ENCODE measurements at regions of chr1 and their contacts with region 1.

Region 1: DNA sequence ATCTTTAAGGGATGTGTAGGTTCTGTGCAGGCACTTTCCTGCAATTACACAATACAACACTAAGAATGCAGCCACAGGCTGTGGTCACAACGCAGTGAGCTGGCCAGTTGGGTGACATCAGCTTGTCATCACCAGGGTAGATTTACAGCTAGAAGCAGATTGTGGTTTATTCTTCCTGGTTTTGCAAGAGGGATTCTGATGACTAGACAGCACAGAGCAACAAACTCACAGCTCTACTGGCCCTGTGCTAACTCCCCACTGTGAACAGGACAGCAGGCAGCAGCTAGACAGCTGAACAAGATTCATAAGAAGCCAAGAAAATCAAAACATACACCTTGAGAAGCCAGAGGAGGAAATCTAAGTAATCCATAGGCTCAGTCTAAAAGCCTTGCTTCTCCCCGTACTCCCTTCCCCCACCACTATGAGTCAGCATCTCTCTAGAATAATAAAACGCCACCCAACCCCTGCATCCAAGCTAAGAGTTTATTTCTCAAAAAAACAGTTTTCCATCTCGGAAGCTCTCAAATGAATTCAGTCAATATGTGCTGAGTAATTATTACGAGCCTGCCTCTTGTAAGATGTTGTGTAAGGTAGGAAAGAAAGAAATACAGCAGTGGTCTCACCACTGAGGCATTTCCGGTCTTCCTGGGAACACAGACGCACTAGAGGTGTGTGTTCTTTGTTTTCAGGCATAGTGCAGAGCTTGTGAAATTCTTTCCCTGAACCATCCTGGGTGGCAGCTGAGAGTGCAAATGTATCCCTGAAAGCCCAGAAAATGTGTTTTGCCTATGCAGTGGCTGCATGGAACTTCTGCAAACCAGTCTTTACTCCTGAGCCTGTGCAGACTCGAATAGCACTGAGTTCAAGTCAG is 162.8 kb downstream of the NTPCR start:
- DNase-seq: peak; percentile 100
- ATAC-seq: peak; percentile 94
- H3K4me3 ChIP-seq: peak overlapping the region; percentile 0; the same call in 1 of the 2 replicates
- H3K27ac ChIP-seq: peak overlapping the region; percentile 81
- H3K4me1 ChIP-seq: peaks cover 16% of the 10 kb centered on the region
- H3K27me3 ChIP-seq: no peaks in the 10 kb centered on the region
- CTCF ChIP-seq: no peak
- POLR2A ChIP-seq: peak; percentile 66; the same call in 1 of the 2 replicates
- RAD21 ChIP-seq: no peak; the same call in 1 of the 2 replicates

Region 2: GRCh38 chr1:232620356-232620969 is 492.8 kb before region 1 on chr1:
- CTCF ChIA-PET with region 1: no interaction called
- POLR2A ChIA-PET with region 1: no interaction called
- dilution Hi-C with region 1: no loop called
- in situ Hi-C with region 1: no loop called
- intact Hi-C with region 1: no loop called
- DNase-seq: peak; percentile 71
- ATAC-seq: peak; percentile 56
- H3K4me3 ChIP-seq: no peak overlapping the region
- H3K27ac ChIP-seq: no peak overlapping the region
- H3K4me1 ChIP-seq: peaks cover 5% of the 10 kb centered on the region
- H3K27me3 ChIP-seq: no peaks in the 10 kb centered on the region
- CTCF ChIP-seq: no peak
- POLR2A ChIP-seq: no peak
- RAD21 ChIP-seq: no peak

Region 3: DNA sequence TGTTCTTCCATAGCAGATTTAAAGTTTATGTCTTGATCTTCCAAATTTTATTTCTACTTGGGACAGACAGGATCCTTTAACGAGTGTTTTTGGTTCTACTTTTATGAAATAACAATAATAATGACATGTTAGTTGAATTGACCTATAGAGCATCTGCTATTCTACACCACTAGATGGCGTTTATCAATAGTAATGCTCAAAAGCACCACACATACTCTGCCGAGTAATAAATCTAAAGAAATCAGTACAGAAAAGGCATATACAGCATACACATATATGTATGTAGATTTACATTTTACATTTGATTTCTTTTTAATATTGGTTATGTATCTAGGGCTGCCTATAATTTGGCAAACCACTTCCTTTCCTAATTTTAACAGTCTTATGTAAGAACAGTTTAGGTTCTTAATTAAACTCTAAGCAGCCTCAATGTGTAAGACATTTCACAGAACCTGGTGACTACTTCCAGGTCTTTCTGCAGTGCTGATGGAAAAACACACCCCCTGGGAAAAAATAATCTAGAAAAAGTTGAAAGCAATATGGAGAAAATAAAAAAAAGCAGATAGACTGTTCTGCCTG is 477.4 kb before region 1 on chr1:
- CTCF ChIA-PET with region 1: no interaction called
- POLR2A ChIA-PET with region 1: no interaction called
- dilution Hi-C with region 1: no loop called
- in situ Hi-C with region 1: no loop called
- intact Hi-C with region 1: loop called (anchors 5 kb)
- DNase-seq: peak; percentile 70
- ATAC-seq: peak; percentile 89
- H3K4me3 ChIP-seq: no peak overlapping the region
- H3K27ac ChIP-seq: no peak overlapping the region
- H3K4me1 ChIP-seq: no peaks in the 10 kb centered on the region
- H3K27me3 ChIP-seq: peaks cover 12% of the 10 kb centered on the region
- CTCF ChIP-seq: peak; percentile 83
- POLR2A ChIP-seq: no peak
- RAD21 ChIP-seq: peak; percentile 76

Region 4: DNA sequence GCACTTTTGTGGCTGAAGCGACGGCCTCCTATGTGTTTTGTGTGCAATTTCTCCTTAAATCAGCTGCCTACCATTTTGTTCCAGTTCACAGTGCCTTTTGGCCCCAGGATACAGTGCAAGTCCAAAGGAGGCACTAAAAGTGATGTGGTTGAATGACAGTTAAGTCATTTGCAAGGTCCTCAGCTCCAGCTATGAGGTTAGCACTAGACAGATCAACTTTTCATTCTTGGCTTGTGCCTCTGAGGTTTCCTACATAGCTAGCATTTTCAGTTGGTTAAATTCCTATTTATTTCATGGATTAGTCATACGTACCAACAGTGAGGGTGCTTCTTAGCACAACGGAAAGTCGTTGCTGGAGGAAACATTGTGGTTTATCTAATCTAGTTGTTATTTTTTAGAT is 222.2 kb before region 1 on chr1:
- CTCF ChIA-PET with region 1: no interaction called
- POLR2A ChIA-PET with region 1: no interaction called
- dilution Hi-C with region 1: no loop called
- in situ Hi-C with region 1: no loop called
- intact Hi-C with region 1: loop called (anchors 5 kb)
- DNase-seq: peak; percentile 81
- ATAC-seq: peak; percentile 99
- H3K4me3 ChIP-seq: no peak overlapping the region
- H3K27ac ChIP-seq: no peak overlapping the region; the same call in 1 of the 2 replicates
- H3K4me1 ChIP-seq: peaks cover 7% of the 10 kb centered on the region
- H3K27me3 ChIP-seq: peaks cover 5% of the 10 kb centered on the region; the same call in 1 of the 2 replicates
- CTCF ChIP-seq: no peak
- POLR2A ChIP-seq: no peak
- RAD21 ChIP-seq: no peak

Region 5: GRCh38 chr1:232950197-232951176 is 162.8 kb before region 1 on chr1 and contains the start of gene NTPCR:
- CTCF ChIA-PET with region 1: no interaction called
- POLR2A ChIA-PET with region 1: interaction called, 7 read pairs
- dilution Hi-C with region 1: no loop called
- in situ Hi-C with region 1: no loop called
- intact Hi-C with region 1: loop called (anchors 2 kb)
- DNase-seq: peak; percentile 90
- ATAC-seq: peak; percentile 94
- H3K4me3 ChIP-seq: peak within 1 kb of the TSS; percentile 76
- H3K27ac ChIP-seq: peak within 1 kb of the TSS; percentile 98
- H3K4me1 ChIP-seq: peaks cover 10% of the 10 kb centered on the region
- H3K27me3 ChIP-seq: no peaks in the 10 kb centered on the region
- CTCF ChIP-seq: no peak
- POLR2A ChIP-seq: peak; percentile 28; the same call in 1 of the 2 replicates
- RAD21 ChIP-seq: no peak
- total RNA-seq, gene NTPCR: 13.3 and 16.4 TPM in 2 replicates

Region 6: DNA sequence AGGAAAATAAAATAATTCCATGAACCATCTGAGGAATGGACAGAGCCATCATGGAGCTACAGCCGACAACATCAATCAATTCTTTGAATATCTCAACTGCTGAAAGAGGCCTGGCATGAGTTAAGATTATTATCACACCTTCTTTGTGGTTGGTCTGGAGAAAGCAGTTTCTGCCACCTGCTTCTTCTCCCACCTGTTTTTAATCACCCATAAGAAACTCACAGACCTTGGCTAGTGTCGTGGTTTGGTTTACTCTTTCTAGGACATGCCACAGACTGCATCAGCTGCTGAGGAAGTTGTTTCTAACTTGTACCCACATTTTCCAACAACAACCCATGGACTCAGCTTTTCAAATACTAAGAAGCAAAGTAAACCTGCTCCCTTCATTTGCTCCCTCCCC is 97.3 kb before region 1 on chr1:
- CTCF ChIA-PET with region 1: no interaction called
- POLR2A ChIA-PET with region 1: no interaction called
- dilution Hi-C with region 1: no loop called
- in situ Hi-C with region 1: no loop called
- intact Hi-C with region 1: loop called (anchors 5 kb)
- DNase-seq: no peak
- ATAC-seq: no peak
- H3K4me3 ChIP-seq: no peak overlapping the region
- H3K27ac ChIP-seq: peak overlapping the region; percentile 25; the same call in 1 of the 2 replicates
- H3K4me1 ChIP-seq: peaks cover 14% of the 10 kb centered on the region
- H3K27me3 ChIP-seq: no peaks in the 10 kb centered on the region
- CTCF ChIP-seq: no peak
- POLR2A ChIP-seq: no peak
- RAD21 ChIP-seq: no peak

Region 7: DNA sequence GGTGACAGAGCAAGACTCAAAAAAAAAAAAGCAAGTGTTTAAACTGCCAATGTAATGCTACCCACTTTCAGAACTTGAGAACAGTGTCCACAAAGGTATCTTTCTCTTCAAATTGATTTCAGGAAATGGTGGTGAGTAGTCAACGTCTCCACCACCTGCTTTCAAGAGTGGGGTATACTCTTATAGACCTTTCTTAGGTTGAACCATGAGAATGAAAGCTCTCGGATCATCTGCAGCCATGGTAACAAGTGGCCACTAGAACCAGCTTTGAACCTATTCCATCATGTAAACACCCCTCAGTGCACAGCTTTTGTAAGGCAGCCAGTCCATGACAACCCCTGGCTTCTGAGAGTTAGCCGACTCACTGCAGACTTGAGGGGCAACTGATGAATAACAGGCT is 55.4 kb before region 1 on chr1:
- CTCF ChIA-PET with region 1: no interaction called
- POLR2A ChIA-PET with region 1: no interaction called
- dilution Hi-C with region 1: no loop called
- in situ Hi-C with region 1: no loop called
- intact Hi-C with region 1: no loop called
- DNase-seq: no peak
- ATAC-seq: no peak
- H3K4me3 ChIP-seq: no peak overlapping the region
- H3K27ac ChIP-seq: no peak overlapping the region
- H3K4me1 ChIP-seq: no peaks in the 10 kb centered on the region
- H3K27me3 ChIP-seq: peaks cover 2% of the 10 kb centered on the region; the same call in 1 of the 2 replicates
- CTCF ChIP-seq: no peak
- POLR2A ChIP-seq: no peak
- RAD21 ChIP-seq: no peak

Region 8: GRCh38 chr1:233209481-233209880 is 96.2 kb after region 1 on chr1:
- CTCF ChIA-PET with region 1: no interaction called
- POLR2A ChIA-PET with region 1: no interaction called
- dilution Hi-C with region 1: no loop called
- in situ Hi-C with region 1: no loop called
- intact Hi-C with region 1: no loop called
- DNase-seq: no peak
- ATAC-seq: no peak
- H3K4me3 ChIP-seq: no peak overlapping the region
- H3K27ac ChIP-seq: no peak overlapping the region
- H3K4me1 ChIP-seq: peaks cover 3% of the 10 kb centered on the region; the same call in 1 of the 2 replicates
- H3K27me3 ChIP-seq: no peaks in the 10 kb centered on the region
- CTCF ChIP-seq: no peak
- POLR2A ChIP-seq: no peak
- RAD21 ChIP-seq: no peak

Region 9: GRCh38 chr1:233224311-233224710 is 111.1 kb after region 1 on chr1:
- CTCF ChIA-PET with region 1: no interaction called
- POLR2A ChIA-PET with region 1: no interaction called
- dilution Hi-C with region 1: no loop called
- in situ Hi-C with region 1: no loop called
- intact Hi-C with region 1: loop called (anchors 5 kb)
- DNase-seq: peak; percentile 19
- ATAC-seq: peak; percentile 68
- H3K4me3 ChIP-seq: no peak overlapping the region
- H3K27ac ChIP-seq: no peak overlapping the region
- H3K4me1 ChIP-seq: peaks cover 4% of the 10 kb centered on the region
- H3K27me3 ChIP-seq: no peaks in the 10 kb centered on the region
- CTCF ChIP-seq: no peak
- POLR2A ChIP-seq: no peak
- RAD21 ChIP-seq: no peak

Region 10: DNA sequence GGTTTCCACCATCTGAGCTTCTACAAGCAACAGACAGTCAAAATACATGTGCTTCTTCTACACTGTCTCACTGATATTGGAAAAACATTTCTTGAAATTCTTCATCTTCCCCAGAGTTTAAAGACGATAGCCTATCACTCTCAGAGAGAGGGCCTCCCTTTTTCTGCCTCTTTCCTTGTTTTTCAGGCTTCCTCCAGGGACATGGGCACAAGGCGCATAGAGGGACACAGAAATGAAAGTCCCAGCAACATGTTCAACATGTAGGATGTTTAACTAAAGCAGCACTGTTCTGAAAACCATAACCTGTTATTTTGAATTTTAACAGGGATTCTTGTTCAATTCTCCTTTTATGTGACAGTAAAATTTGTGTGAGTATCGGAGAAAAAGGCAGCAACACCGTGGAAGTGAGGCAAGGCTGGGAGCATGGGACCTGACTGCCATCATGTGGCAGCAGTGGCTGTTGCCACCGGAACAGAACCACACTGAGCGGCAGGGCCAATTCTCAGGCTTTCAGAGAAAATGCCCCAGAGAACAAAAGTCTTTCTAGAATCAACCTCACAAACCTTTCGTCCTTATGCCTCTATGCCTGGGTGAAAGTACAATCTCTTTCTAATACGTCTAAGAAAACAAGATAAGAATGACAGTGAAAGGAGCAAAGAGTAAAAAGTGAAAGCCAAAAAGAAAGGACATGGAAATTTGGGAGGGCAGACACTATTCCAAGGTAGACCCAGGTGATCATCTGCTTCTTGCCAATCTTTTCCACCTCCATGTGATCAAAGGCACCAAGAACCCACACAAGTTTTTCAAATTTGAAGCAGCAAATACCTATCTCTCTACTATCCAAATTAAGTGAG is 127.8 kb after region 1 on chr1:
- CTCF ChIA-PET with region 1: no interaction called
- POLR2A ChIA-PET with region 1: no interaction called
- dilution Hi-C with region 1: no loop called
- in situ Hi-C with region 1: no loop called
- intact Hi-C with region 1: loop called (anchors 5 kb)
- DNase-seq: peak; percentile 42
- ATAC-seq: peak; percentile 71
- H3K4me3 ChIP-seq: no peak overlapping the region
- H3K27ac ChIP-seq: no peak overlapping the region
- H3K4me1 ChIP-seq: peaks cover 4% of the 10 kb centered on the region; the same call in 1 of the 2 replicates
- H3K27me3 ChIP-seq: no peaks in the 10 kb centered on the region
- CTCF ChIP-seq: peak; percentile 76
- POLR2A ChIP-seq: no peak
- RAD21 ChIP-seq: peak; percentile 92

Region 11: GRCh38 chr1:233960386-233960785 is 847.1 kb after region 1 on chr1:
- CTCF ChIA-PET with region 1: no interaction called
- POLR2A ChIA-PET with region 1: no interaction called
- dilution Hi-C with region 1: no loop called
- in situ Hi-C with region 1: no loop called
- intact Hi-C with region 1: no loop called
- DNase-seq: no peak
- ATAC-seq: no peak
- H3K4me3 ChIP-seq: no peak overlapping the region
- H3K27ac ChIP-seq: no peak overlapping the region
- H3K4me1 ChIP-seq: no peaks in the 10 kb centered on the region
- H3K27me3 ChIP-seq: no peaks in the 10 kb centered on the region
- CTCF ChIP-seq: no peak
- POLR2A ChIP-seq: no peak
- RAD21 ChIP-seq: no peak

Measured in IMR-90 (cell line).